Colonic mucosa (tissue), 4 donors: ENCODE measurements at regions of chr5 and their contacts with region 1.

Region 1: GRCh38 chr5:177454397-177455035 is 7.9 kb downstream of the PRR7 start:
- DNase-seq: peak; percentile 95
- H3K4me3 ChIP-seq: peak overlapping the region; percentile 52
- H3K27ac ChIP-seq: peak overlapping the region; percentile 82
- H3K4me1 ChIP-seq: peaks cover 7% of the 10 kb centered on the region
- H3K27me3 ChIP-seq: no peaks in the 10 kb centered on the region
- CTCF ChIP-seq: peak; percentile 84

Region 2: DNA sequence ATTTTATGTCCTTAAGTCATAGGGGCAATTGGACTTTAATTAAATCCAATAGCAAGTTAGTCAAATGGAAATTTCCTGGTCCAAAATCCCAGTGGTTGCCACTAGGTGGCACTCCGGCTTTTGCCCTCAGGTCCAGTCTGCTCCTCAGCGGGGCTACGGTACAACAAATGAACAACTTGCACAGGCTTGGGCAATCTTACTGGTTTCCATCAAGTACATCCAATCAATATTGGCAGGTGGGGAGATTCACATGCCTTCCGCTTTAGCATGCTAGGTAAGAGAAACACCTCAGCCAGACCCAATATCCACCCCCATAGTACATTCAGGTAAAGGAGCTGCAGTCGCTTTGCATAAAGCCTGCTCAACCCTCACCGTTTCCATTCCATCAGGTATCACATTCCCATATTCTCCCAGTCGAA is 136.5 kb before region 1 on chr5:
- intact Hi-C with region 1: loop called (anchors 5 kb)
- DNase-seq: peak; percentile 84
- H3K4me3 ChIP-seq: no peak overlapping the region
- H3K27ac ChIP-seq: no peak overlapping the region
- H3K4me1 ChIP-seq: peaks cover under 1% of the 10 kb centered on the region
- H3K27me3 ChIP-seq: no peaks in the 10 kb centered on the region
- CTCF ChIP-seq: peak; percentile 78

Region 3: DNA sequence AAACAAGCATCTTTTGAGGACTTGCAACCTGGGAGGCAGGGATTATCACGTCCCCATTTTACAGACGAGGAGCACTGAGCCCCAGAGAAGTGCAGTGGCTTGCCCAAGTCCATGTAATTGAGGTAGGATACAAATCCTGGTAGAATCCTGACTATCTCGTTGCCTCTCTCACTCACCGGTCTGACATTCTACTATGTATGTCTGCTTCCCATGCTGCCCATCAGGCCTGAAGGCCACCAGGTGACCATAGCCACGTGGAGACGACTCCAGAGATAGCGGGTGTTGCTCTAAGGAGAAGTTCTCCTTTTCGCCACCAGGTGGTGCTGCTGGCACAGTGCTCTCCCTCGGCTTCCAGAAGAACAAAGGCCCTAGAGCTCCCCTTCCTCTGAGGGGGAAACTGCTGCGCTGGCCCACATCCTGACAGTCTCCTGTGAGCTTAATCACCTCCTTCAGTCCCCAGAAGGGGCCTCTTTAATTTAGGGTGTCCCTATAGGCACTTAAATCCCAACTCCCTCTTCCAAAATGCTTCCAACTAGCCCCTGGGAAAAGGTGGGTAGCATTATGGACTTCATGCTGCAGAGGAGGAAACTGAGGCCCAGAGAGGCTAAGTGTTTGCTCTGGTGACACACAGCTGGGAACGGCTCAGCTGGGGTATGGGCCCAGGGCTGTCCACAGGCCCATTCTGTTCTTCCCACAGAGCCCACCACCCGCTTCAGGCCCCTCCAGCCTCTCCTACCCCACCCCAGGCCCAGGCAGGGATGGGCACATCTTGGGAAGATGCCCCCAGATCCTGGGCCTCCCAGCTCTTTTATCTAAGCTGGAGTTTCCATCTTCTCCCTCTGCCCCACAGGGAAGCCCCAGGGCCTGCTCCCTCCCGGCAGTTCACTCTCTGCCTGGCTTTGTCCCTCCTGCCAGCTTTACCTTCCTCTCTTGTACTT is 63.9 kb before region 1 on chr5:
- intact Hi-C with region 1: loop called (anchors 2 kb)
- DNase-seq: peak; percentile 90
- H3K4me3 ChIP-seq: no peak overlapping the region
- H3K27ac ChIP-seq: peak overlapping the region; percentile 11
- H3K4me1 ChIP-seq: peaks cover 9% of the 10 kb centered on the region
- H3K27me3 ChIP-seq: no peaks in the 10 kb centered on the region
- CTCF ChIP-seq: peak; percentile 99

Region 4: DNA sequence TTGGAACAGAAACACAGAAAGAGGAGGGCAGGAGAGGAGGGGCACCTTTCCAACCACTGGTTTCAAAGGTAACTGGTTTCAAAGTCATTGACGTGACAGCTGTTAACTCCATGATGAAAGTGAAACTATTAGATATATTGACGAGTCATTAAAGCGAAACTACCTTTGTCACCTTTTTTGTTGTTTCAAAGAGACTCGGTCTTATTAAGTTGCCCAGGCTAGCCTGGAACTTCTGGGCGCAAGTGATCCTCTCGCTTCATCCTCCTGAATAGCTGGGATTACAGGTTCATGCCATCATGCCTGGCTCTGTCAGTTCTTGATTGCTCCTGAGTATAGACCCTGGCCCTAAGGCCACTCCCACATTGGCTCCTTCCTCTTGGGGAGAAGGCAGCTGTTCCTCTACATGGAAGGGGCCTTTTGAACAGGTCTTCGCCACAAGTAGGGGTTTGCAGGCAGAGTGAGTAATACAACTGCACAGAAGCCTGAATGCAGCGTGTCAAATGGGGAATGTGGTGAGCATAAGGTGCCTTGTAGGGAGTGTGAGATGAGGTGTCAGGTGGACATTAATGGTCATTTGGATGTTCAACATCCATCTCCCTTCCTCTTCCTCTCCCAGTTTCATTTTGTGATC is 41.8 kb before region 1 on chr5:
- intact Hi-C with region 1: no loop called
- DNase-seq: no peak
- H3K4me3 ChIP-seq: no peak overlapping the region
- H3K27ac ChIP-seq: no peak overlapping the region
- H3K4me1 ChIP-seq: no peaks in the 10 kb centered on the region
- H3K27me3 ChIP-seq: no peaks in the 10 kb centered on the region
- CTCF ChIP-seq: no peak

Region 5: GRCh38 chr5:177554474-177555111 is 100.1 kb after region 1 on chr5 and contains the start of gene FAM193B:
- intact Hi-C with region 1: no loop called
- DNase-seq: peak; percentile 97
- H3K4me3 ChIP-seq: peak within 1 kb of the TSS; percentile 97
- H3K27ac ChIP-seq: peak within 1 kb of the TSS; percentile 69
- H3K4me1 ChIP-seq: peaks cover 3% of the 10 kb centered on the region
- H3K27me3 ChIP-seq: no peaks in the 10 kb centered on the region
- CTCF ChIP-seq: no peak
- total RNA-seq, gene FAM193B: 39.4 to 78.6 TPM